ENCODE measurements at regions of chr1 and their contacts with region 1.

Region 1: GRCh38 chr1:21189906-21190500 is 13.3 kb upstream of the EIF4G3 start:
- DNase-seq: no peak
- H3K4me3 ChIP-seq: no peak overlapping the region
- H3K27ac ChIP-seq: no peak overlapping the region
- H3K4me1 ChIP-seq: peaks cover 0 to 10% of the 10 kb centered on the region in 2 donors
- H3K27me3 ChIP-seq: no peaks in the 10 kb centered on the region
- CTCF ChIP-seq: no peak
- POLR2A ChIP-seq: no peak

Region 2: DNA sequence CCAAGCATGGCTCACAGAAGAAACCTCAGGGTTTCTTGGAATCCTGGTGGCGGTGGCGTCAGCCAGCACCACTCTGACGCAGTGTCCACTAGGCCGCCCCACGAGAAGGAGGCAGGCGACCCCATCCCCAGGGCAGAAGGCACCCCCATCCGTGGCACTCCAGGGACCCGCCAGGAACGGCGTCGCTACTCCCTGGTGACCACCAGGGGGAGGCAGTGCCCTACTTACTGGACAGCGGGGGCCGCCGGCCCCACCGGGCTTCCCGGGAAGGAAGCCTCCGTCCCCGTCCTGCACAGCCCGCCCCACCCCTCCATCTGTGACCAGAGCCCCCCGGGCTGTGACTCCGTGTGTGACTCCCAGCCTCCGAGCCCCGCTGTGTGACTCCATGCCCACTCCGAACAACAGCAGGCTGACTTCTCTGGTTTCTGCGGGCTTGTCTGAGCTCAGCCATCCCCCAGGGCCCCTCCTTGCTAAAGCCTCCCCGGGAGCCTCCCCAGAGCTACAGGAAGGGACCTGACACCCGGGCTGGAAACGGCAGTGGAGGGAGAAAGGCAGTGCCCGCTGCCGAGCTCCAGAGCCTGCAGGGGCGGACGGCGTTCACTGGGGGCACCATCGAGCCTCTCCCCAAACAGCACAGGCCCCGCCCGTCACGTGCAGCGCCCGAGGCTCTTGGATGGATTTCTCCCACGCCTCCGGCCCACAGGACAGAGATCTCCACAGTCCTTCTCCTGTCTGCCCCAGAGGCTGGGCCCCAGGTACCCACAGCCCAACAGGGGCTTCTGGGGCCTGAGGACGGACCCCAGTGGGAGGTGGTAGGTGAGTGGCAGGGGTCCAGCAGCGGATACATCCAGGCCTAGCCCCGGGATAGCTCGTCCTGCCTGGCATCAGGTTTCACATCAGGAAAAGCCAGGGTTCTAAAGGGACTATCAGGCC is 493.3 kb before region 1 on chr1:
- intact Hi-C with region 1: loop called (anchors 5 kb)
- DNase-seq: peak; percentile 81 to 92 (median 89)
- H3K4me3 ChIP-seq: peak overlapping the region; percentile 4 to 69 (median 48)
- H3K27ac ChIP-seq: peak overlapping the region in 4 of 5 donors; percentile 55 to 83 (median 70)
- H3K4me1 ChIP-seq: peaks cover 0 to 5% of the 10 kb centered on the region in 2 donors
- H3K27me3 ChIP-seq: no peaks in the 10 kb centered on the region
- CTCF ChIP-seq: peak; percentile 79 to 99 (median 89)
- POLR2A ChIP-seq: no peak

Region 3: GRCh38 chr1:20896871-20897223 is 293.2 kb before region 1 on chr1:
- intact Hi-C with region 1: no loop called
- DNase-seq: no peak
- H3K4me3 ChIP-seq: no peak overlapping the region
- H3K27ac ChIP-seq: no peak overlapping the region
- H3K4me1 ChIP-seq: peaks cover 0 to 16% of the 10 kb centered on the region in 2 donors
- H3K27me3 ChIP-seq: no peaks in the 10 kb centered on the region
- CTCF ChIP-seq: no peak
- POLR2A ChIP-seq: no peak

Region 4: DNA sequence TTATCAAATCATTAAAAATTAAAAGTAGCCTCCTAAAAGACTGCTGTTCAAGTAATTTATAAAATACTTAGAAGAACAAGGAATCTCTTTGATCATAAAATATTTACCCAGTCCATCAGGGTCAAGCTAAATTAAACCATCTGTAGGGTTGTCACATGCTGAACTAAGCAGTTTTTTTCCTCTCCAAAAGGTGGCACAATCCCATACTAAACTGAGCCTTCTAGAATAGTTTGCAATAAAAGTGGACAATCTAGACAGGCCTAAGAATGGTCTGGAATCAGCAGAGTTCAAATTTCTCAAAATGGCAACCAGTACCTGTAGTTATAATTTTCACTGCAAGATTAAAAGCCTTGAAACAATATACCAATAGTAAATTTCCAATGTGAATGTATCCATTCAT is 208.1 kb before region 1 on chr1:
- intact Hi-C with region 1: loop called (anchors 10 kb)
- DNase-seq: no peak
- H3K4me3 ChIP-seq: no peak overlapping the region
- H3K27ac ChIP-seq: no peak overlapping the region
- H3K4me1 ChIP-seq: peaks cover 0 to 9% of the 10 kb centered on the region in 2 donors
- H3K27me3 ChIP-seq: no peaks in the 10 kb centered on the region
- CTCF ChIP-seq: peak in 5 of 6 experiments; percentile 23 to 50 (median 36)
- POLR2A ChIP-seq: no peak